A549 (cell line): ENCODE measurements at regions of chr16 and their contacts with region 1.

Region 1: DNA sequence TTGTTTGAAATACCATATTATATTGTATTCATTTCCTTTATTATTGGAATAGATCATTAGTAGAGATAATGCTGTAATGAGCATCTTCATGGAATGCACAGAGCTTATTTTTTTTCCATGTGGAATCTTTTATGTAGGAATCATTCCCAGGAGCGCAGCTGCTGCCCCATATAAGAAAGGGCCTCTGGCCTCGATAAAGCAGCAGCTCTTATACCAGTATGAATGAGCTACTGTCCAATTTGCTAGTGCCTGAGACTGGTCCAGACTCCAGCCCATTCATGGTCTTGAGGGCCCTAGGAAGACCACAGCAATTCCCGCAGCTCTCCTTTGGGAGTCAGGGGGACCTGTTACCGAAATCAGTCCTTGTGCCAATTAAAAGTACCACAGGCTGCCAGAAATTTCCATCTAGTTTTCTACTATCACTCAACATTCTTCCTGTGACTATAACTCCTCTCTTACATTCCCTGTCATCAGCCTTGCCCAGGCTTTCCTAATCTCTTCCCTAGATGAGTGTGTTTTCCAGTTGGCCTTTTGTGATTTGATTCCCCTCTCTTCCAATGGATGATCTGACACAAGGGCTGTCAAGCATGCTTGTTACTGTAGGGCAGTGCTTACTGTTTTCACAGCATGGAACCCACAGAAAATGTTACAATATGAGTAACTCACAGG is 1.9 kb downstream of the ZNF843 start:
- DNase-seq: no peak
- ATAC-seq: no peak
- H3K4me3 ChIP-seq: no peak overlapping the region
- H3K27ac ChIP-seq: no peak overlapping the region
- H3K4me1 ChIP-seq: no peaks in the 10 kb centered on the region
- CTCF ChIP-seq: no peak
- EP300 ChIP-seq: no peak
- POLR2A ChIP-seq: no peak
- RAD21 ChIP-seq: no peak

Region 2: DNA sequence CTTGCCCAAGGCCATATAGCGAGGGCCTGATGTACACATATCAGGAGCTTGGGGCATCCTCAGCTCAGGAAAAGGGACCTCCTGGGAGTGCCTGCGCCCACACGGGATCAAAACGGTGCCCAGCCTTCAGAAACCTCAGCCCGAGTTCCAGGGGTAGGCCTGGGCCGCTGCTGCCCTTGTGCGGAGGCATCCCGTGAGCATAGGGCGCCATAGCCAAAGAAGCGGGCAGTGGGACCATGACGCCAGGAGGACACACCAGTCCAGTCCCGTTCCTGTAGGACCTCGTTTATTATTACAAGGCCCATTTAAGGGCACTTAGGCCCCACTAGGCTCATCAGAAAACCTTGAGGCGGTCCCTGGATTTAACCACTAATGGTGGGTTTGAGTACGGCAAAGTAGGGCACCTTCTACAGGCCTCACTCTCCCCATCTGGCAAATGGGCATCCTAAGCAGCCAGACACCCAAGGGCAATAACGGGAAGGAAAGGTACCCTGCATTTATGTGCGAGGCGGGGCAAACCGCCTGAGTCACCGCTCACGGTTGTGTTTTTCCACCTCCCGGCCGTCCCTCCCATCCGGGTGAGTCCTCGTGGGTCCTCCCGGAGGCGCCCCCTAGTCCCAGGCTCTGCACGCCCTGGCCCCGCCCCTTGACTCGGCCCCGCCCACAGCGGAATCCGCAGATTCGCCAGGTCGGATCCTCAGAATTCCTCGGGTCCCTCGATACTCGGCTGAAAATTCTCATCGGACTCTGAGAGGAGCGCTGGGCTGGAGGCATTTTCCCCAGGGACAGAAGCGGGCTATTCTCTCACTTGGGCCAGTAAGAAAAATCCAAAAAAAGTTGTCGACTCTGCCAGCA is 483.8 kb before region 1 on chr16:
- CTCF ChIA-PET with region 1: interaction called, 18 read pairs
- POLR2A ChIA-PET with region 1: interaction called, 4 read pairs
- DNase-seq: peak; percentile 79 to 91
- ATAC-seq: peak; percentile 65 to 80
- H3K4me3 ChIP-seq: peak overlapping the region; percentile 77
- H3K27ac ChIP-seq: peak overlapping the region; percentile 98 to 100
- H3K4me1 ChIP-seq: peaks cover 22% of the 10 kb centered on the region
- CTCF ChIP-seq: 0 out of 3 replicates have a peak, but pooled peaks have one; percentile 25
- EP300 ChIP-seq: no peak
- POLR2A ChIP-seq: no peak; the same call in none of the 2 replicates
- RAD21 ChIP-seq: no peak

Region 3: GRCh38 chr16:31032736-31033708 is 407.6 kb before region 1 on chr16 and contains the start of gene STX4:
- CTCF ChIA-PET with region 1: no interaction called
- POLR2A ChIA-PET with region 1: no interaction called
- DNase-seq: peak; percentile 91 to 97
- ATAC-seq: peak; percentile 89 to 90
- H3K4me3 ChIP-seq: peak within 1 kb of the TSS; percentile 72
- H3K27ac ChIP-seq: peak within 1 kb of the TSS; percentile 85 to 95
- H3K4me1 ChIP-seq: peaks cover 8% of the 10 kb centered on the region; the same call in 1 of the 3 replicates
- CTCF ChIP-seq: no peak
- EP300 ChIP-seq: no peak
- POLR2A ChIP-seq: no peak; the same call in 1 of the 2 replicates
- RAD21 ChIP-seq: no peak
- polyA plus RNA-seq, gene STX4: 37.0 and 39.7 TPM in 2 replicates

Region 4: GRCh38 chr16:31196324-31197088 is 244.1 kb before region 1 on chr16:
- CTCF ChIA-PET with region 1: interaction called, 10 read pairs
- POLR2A ChIA-PET with region 1: no interaction called
- DNase-seq: no peak
- ATAC-seq: no peak
- H3K4me3 ChIP-seq: no peak overlapping the region
- H3K27ac ChIP-seq: no peak overlapping the region
- H3K4me1 ChIP-seq: peaks cover 15% of the 10 kb centered on the region
- CTCF ChIP-seq: no peak
- EP300 ChIP-seq: no peak
- POLR2A ChIP-seq: no peak
- RAD21 ChIP-seq: no peak

Region 5: GRCh38 chr16:31258356-31258755 is 182.3 kb before region 1 on chr16:
- CTCF ChIA-PET with region 1: no interaction called
- POLR2A ChIA-PET with region 1: no interaction called
- DNase-seq: no peak
- ATAC-seq: no peak
- H3K4me3 ChIP-seq: no peak overlapping the region
- H3K27ac ChIP-seq: no peak overlapping the region
- H3K4me1 ChIP-seq: peaks cover 11% of the 10 kb centered on the region
- CTCF ChIP-seq: no peak
- EP300 ChIP-seq: no peak
- POLR2A ChIP-seq: no peak
- RAD21 ChIP-seq: no peak

Region 6: DNA sequence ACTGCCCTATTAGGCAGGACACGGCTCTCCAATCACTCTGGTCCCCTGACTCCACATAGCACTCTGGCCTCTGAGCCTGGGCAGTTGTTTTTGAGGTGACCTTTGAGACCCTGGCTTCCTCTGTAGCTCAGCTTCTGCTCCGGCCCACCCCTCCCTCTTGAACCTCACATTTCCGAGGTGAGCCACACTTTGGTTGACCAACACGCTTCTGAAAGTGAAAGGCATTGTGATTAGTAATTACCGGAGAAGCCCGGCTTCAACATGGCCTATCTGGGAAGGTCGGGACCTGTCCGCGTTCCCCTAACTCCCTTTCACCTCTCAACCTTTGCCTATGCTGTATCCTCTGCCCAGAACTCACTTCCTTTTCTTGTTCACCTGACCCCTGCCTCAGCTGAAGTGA is 95.9 kb before region 1 on chr16:
- CTCF ChIA-PET with region 1: no interaction called
- POLR2A ChIA-PET with region 1: no interaction called
- DNase-seq: no peak
- ATAC-seq: no peak
- H3K4me3 ChIP-seq: no peak overlapping the region
- H3K27ac ChIP-seq: no peak overlapping the region
- H3K4me1 ChIP-seq: no peaks in the 10 kb centered on the region
- CTCF ChIP-seq: no peak
- EP300 ChIP-seq: no peak
- POLR2A ChIP-seq: no peak
- RAD21 ChIP-seq: no peak

Region 7: DNA sequence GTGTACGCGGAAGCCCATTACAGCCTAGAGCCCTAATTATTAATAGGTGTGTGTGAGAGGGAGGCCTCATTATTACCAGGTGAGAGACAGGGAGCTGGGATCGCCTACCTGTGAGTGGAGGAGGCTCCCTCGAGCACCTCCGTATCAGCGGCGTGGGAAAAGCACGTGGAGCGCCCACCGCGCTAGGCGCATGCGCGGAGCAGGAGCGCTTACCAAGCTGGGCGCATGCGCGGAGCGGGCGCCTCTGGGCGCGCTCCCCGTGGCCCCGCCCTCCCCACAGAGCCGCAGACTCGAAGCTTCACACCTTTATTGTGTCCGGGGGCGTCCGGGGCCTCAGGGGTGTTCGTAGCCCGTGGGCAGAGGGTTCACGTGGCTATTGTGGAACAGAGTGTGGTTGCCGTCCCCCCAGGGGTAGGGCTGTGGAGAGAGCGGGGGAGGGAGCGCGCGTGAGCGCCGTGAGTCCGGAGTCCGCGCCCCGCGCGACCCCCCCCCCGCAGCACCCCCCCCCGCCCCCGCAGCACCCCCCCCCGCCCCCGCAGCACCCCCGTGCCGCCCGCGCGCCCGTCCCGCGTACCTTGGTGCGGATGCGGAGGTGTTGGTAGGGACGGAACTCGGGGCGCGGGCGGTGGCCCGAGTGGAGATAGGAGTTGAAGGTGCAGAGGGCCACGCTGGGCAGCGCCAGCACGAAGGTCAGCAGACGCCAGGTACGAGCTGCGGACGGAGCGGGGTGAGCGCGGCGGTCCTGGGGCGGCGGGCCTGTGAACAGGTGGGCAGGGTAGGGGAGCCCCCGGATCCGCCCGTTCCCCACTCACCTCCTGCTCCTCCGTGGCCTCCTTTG is 13.0 kb before region 1 on chr16:
- CTCF ChIA-PET with region 1: interaction called, 33 read pairs
- POLR2A ChIA-PET with region 1: no interaction called
- DNase-seq: no peak
- ATAC-seq: no peak
- H3K4me3 ChIP-seq: no peak overlapping the region
- H3K27ac ChIP-seq: no peak overlapping the region
- H3K4me1 ChIP-seq: no peaks in the 10 kb centered on the region
- CTCF ChIP-seq: no peak
- EP300 ChIP-seq: no peak
- POLR2A ChIP-seq: no peak
- RAD21 ChIP-seq: no peak

Region 8: GRCh38 chr16:31451681-31452351 is 11.2 kb after region 1 on chr16:
- CTCF ChIA-PET with region 1: interaction called, 52 read pairs
- POLR2A ChIA-PET with region 1: interaction called, 4 read pairs
- DNase-seq: peak; percentile 82 to 85
- ATAC-seq: peak; percentile 94 to 95
- H3K4me3 ChIP-seq: no peak overlapping the region
- H3K27ac ChIP-seq: peak overlapping the region; percentile 74 to 85
- H3K4me1 ChIP-seq: peaks cover 55% of the 10 kb centered on the region
- CTCF ChIP-seq: peak; percentile 29; the same call in 1 of the 3 replicates
- EP300 ChIP-seq: no peak
- POLR2A ChIP-seq: peak; percentile 15; the same call in 1 of the 2 replicates
- RAD21 ChIP-seq: peak in 1 of 2 experiments; percentile 47; a peak in 2 of 5 replicates